Sigmoid colon (tissue), 7 donors: ENCODE measurements at regions of chr11 and their contacts with region 1.

Region 1: GRCh38 chr11:126310228-126310991 is 6.5 kb downstream of the DCPS start:
- DNase-seq: peak; percentile 86
- H3K4me3 ChIP-seq: no peak overlapping the region
- H3K27ac ChIP-seq: peak overlapping the region in 2 of 4 donors; percentile 10 to 15
- H3K4me1 ChIP-seq: peaks cover 0 to 10% (median 9%) of the 10 kb centered on the region in 4 donors
- H3K27me3 ChIP-seq: no peaks in the 10 kb centered on the region
- CTCF ChIP-seq: peak; percentile 53 to 87 (median 76)
- EP300 ChIP-seq: no peak
- POLR2A ChIP-seq: no peak

Region 2: DNA sequence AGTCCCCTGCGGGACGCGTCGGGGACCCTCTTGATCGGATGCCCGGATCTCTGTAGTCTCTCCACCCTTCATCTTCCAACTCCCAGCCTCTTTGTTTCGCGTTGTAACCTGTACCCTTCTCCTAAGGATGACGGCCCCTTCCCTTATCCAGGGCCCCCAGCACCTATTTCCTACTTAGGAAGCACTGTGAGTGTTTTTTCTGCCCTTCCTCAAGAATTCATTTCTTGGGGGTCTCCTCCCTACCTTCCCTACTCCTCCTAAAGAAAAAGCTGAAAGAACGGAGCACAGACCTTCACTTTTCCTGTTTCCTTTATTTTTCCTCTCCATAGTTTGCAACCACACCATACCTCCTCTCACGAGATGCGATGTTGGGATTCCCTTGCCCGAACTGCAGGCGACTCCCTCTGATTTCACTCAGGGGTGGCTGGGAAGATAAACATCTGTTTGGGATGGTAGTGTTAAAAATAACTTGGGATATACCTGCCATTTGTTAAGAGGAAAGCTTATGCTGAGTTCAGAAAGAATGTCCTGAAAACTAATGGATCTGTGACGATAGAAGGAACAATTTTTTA is 98.2 kb before region 1 on chr11:
- intact Hi-C with region 1: no loop called
- DNase-seq: no peak
- H3K4me3 ChIP-seq: peak overlapping the region; percentile 66 to 92 (median 76)
- H3K27ac ChIP-seq: peak overlapping the region; percentile 74 to 78 (median 76)
- H3K4me1 ChIP-seq: peaks cover 0 to 28% (median 21%) of the 10 kb centered on the region in 4 donors
- H3K27me3 ChIP-seq: no peaks in the 10 kb centered on the region
- CTCF ChIP-seq: no peak
- EP300 ChIP-seq: no peak
- POLR2A ChIP-seq: no peak

Region 3: GRCh38 chr11:126355926-126356897 is 45.8 kb after region 1 on chr11:
- intact Hi-C with region 1: loop called (anchors 2 kb)
- DNase-seq: peak; percentile 80
- H3K4me3 ChIP-seq: peak overlapping the region; percentile 67 to 82 (median 78)
- H3K27ac ChIP-seq: peak overlapping the region; percentile 86 to 90 (median 87)
- H3K4me1 ChIP-seq: peaks cover 0 to 86% (median 77%) of the 10 kb centered on the region in 4 donors
- H3K27me3 ChIP-seq: no peaks in the 10 kb centered on the region
- CTCF ChIP-seq: no peak
- EP300 ChIP-seq: no peak
- POLR2A ChIP-seq: no peak

Region 4: DNA sequence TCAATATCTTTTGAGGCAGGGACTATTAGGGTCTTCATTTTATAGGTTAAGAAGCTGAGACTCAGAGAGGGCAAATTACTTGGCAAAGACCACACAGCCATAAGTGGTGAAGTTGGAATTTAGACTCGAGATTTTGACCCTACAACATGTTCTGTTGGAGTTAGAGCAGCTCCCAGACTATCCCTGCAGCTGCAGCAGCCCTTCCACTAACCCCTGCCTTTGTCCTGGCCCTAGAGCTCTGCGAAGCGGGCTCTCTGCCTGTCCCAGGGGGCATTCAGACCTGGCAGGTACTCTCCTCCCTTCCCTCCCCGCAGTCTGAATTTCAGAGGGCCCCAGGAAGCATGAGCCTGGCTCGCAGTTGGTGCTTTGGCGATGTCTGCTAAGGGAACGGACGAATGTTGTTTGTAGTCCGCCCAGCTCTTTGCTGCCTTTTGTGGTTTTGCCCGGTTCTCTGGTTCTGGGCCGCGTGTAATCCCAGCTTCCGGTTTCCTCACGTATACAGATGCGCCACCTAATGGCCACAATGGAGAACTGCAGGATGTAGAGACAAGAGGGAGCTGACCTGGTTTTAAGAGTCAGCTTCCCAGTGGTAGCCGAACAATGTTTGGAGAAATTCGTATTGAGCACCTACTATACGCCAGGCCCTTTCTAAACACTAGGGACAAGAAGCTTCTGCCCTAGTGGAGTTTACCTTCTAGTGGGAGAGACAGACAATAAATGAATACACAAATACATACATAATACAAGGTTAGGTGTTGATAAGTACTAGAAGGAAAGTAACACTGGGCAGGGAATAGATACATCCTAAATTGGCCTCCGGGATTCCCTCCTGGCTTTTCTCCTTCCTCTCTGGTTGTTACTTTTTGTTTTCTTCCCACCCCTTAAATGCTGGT is 170.2 kb after region 1 on chr11:
- intact Hi-C with region 1: loop called (anchors 2 kb)
- DNase-seq: peak; percentile 93
- H3K4me3 ChIP-seq: peak overlapping the region in 1 of 4 donors; percentile 6
- H3K27ac ChIP-seq: peak overlapping the region; percentile 70 to 78 (median 74)
- H3K4me1 ChIP-seq: peaks cover 0 to 25% (median 11%) of the 10 kb centered on the region in 4 donors
- H3K27me3 ChIP-seq: no peaks in the 10 kb centered on the region
- CTCF ChIP-seq: peak; percentile 89 to 95 (median 94)
- EP300 ChIP-seq: no peak
- POLR2A ChIP-seq: no peak